ENCODE measurements at regions of chr2 and their contacts with region 1.

Region 1: GRCh38 chr2:88159955-88160415 is 10.2 kb upstream of the THNSL2 start:
- H3K4me3 Mint-ChIP-seq: no peak overlapping the region
- H3K27ac Mint-ChIP-seq: no peak overlapping the region
- H3K4me1 Mint-ChIP-seq: peaks cover 1% of the 10 kb centered on the region
- H3K27me3 Mint-ChIP-seq: peaks cover 2% of the 10 kb centered on the region

Region 2: GRCh38 chr2:88003074-88003755 is 156.8 kb before region 1 on chr2:
- intact Hi-C with region 1: loop called (anchors 5 kb)
- H3K4me3 Mint-ChIP-seq: no peak overlapping the region
- H3K27ac Mint-ChIP-seq: no peak overlapping the region
- H3K4me1 Mint-ChIP-seq: peaks cover 11% of the 10 kb centered on the region
- H3K27me3 Mint-ChIP-seq: peaks cover 10% of the 10 kb centered on the region

Region 3: DNA sequence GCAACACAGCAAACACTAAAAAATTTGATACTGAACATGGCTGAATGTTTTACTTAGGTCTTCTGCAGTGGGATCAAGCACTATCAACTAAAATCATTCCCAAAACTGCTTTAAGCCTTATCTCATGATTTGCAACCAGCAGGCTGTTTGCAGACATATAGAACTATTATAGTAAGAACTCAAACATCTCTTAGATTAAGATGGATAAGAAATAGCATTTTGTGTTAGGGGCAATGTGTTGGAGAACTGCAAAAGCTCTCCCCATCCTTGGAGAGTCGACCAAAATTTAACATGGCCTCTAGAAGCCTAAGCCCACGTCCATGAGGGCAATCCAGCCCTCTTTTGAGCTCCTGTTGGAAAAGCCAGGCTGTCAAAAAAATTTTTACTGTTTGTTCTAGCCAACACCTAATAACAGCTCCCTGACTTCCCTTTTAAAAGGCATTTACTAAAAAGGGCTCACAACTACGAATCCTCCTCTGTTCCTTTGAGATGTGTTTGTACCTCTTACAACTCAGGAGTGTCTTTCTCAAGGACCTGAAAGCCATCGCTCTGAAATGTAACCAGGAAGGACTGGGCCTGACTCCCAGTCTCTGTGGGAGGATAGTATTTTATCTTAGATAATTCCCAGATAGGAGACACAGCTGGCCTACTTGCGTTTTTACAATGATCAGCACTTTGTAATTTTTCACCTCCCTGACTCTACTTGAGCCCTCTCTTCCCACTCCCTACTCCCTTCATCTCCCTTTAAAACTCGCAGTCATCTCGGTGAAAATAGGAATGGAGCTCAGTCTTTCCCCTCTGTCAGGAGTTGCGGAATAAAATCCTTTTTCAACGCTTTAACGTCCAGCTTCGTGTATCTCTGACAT is 105.8 kb before region 1 on chr2:
- intact Hi-C with region 1: no loop called
- H3K4me3 Mint-ChIP-seq: peak overlapping the region; percentile 96
- H3K27ac Mint-ChIP-seq: peak overlapping the region; percentile 97
- H3K4me1 Mint-ChIP-seq: peaks cover 53% of the 10 kb centered on the region
- H3K27me3 Mint-ChIP-seq: no peaks in the 10 kb centered on the region

Region 4: DNA sequence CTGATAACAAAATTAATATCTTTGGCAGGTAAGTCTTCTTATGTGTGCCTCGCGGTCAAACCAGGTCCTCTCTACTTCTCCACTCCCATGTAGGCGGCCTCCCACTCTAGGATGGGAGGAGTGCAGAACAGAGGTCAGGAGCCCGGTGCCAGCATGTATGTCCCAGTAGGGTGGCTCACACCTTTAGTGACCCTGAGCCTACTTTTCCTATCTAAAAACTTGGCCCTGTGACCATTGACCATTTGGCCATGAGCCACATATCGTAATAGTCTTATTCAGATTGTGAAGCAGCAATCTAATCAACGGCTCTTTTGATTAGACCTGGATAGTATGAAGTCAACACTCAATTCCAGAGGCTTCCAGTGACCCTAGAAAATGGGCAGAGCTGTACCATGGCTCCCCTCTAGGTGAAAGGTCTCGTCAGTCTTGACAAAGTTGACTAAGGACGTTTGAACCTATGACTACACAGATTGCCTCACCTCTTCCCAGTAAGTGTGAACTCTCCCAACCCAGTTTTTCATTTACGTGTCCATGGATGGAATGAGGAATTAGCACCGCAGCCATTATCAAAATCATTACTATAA is 15.0 kb before region 1 on chr2:
- intact Hi-C with region 1: no loop called
- H3K4me3 Mint-ChIP-seq: no peak overlapping the region
- H3K27ac Mint-ChIP-seq: no peak overlapping the region
- H3K4me1 Mint-ChIP-seq: no peaks in the 10 kb centered on the region
- H3K27me3 Mint-ChIP-seq: peaks cover 7% of the 10 kb centered on the region

Region 5: DNA sequence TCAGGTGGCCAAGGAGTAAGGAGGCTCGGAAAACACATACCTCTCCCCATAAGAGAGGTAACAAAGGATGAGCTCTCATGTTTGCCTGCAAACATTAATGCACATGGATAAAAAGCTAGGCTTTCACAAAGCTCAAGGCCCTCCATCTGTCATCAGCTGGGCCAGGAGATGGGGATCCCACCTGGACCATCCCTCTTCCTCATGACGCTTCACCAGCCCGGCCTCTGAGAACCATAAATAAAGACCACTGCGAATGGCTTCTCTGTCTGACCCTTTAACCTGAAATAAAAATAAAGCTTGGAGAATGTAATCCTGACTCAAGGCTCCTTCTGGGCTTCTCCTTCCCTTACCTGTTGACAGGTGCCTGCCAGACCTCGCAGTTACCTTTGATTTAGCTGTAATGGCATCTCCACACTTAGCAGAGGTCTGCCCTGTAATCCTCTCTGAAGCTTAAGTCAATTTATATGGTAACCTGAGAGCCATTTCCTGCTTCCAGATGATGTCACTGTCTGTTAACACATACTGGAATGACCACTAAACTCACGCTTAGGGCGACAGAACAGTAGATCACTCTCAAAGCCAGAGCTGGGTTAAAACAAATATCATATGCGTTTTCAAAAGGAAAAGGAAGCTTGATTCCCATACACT is 321.8 kb after region 1 on chr2:
- intact Hi-C with region 1: no loop called
- H3K4me3 Mint-ChIP-seq: no peak overlapping the region
- H3K27ac Mint-ChIP-seq: no peak overlapping the region
- H3K4me1 Mint-ChIP-seq: no peaks in the 10 kb centered on the region
- H3K27me3 Mint-ChIP-seq: peaks cover 4% of the 10 kb centered on the region

Region 6: GRCh38 chr2:88880441-88880953 is 720.5 kb after region 1 on chr2:
- intact Hi-C with region 1: no loop called
- H3K4me3 Mint-ChIP-seq: no peak overlapping the region
- H3K27ac Mint-ChIP-seq: no peak overlapping the region
- H3K4me1 Mint-ChIP-seq: peaks cover 4% of the 10 kb centered on the region
- H3K27me3 Mint-ChIP-seq: no peaks in the 10 kb centered on the region